ENCODE measurements at regions of chr5 and their contacts with region 1.

Region 1: DNA sequence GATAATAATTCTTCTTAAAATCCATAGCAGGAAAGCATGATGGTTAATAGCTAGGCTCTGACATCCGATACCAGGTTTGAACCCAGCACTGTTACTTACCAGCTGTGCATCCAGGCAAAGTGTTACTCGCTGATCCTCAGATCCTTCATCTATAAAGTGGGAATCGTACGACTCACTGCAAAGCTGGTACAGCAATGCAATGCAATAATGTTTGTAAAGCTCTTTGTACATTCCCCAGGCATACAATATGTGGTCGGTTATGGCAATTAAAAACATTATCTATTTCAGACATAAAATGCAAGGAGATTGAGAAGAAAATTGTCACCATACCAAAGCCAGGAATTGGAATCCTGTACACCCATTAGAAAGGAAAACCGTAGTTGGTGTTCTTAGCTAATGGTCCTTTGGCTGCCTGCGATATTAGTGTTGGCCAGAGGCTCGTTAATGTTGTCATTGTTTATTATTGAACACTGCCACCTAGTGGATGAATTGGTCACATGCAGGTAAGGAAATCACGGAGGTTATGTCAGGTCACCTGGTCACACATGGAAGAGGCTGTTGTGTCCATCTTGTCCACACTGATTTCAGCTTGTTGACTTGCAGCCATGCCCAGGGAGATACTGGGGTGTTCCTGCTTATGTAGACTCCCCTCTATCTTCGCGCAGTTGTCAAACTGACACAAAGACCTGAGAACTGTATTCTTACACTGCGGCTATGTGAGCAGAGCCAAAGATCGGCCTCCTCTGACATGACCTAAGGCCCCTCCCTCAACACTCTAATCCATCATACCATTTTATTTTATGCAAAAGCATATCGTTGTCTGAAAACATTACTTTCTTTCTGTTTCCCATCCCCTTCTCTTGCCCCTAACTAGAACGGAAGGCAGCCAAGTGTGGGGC is 87.5 kb upstream of the PPP2R2B start:
- DNase-seq: peak; percentile 58
- H3K4me3 ChIP-seq: no peak overlapping the region
- H3K27ac ChIP-seq: no peak overlapping the region
- H3K4me1 ChIP-seq: no peaks in the 10 kb centered on the region
- H3K27me3 ChIP-seq: no peaks in the 10 kb centered on the region
- CTCF ChIP-seq: peak; percentile 91

Region 2: DNA sequence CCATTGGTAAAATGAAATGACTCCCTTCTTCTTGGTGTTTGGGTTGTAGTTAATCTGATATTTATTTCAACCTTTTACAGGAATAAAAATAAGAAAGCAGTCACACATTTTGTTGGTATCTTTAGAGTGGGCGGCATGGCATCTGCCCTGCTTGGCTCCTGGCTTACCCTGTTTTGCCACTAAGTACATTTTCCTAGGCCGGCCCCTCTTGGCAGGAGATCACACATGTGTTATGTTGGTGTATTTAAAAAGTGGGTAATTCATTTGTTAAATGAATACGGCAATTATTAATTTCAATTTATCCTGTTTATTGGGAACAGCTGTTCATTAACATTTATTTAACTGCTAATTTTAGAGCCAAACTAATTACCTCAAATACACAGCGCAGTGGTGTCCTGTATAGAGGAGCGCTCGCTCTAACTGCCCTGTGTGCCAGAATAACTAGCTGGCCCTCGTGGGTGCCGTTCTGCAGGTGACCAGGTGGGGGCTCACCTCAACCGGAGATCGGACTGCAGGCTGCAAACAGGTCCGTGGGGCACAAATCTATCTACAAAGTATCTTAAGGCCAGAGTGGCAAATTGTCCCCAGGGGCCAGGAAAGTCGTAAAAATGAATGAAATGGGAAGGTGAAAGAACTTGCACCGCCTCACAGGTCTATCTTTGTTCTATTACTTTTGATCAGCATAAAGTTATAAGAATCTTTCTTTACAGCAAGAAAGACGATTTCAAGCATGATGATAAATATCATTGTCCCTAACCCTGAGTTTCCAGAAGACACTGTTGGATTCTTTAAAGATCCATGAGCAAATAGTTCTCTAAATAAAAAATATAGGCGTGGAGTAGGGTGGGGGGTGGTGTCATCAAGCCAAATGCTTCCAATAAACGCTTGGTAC is 423.8 kb before region 1 on chr5:
- intact Hi-C with region 1: loop called (anchors 5 kb)
- DNase-seq: peak; percentile 76
- H3K4me3 ChIP-seq: no peak overlapping the region
- H3K27ac ChIP-seq: no peak overlapping the region
- H3K4me1 ChIP-seq: no peaks in the 10 kb centered on the region
- H3K27me3 ChIP-seq: no peaks in the 10 kb centered on the region
- CTCF ChIP-seq: peak; percentile 79

Region 3: GRCh38 chr5:146647656-146648199 is 318.3 kb before region 1 on chr5:
- intact Hi-C with region 1: no loop called
- DNase-seq: no peak
- H3K4me3 ChIP-seq: no peak overlapping the region
- H3K27ac ChIP-seq: no peak overlapping the region
- H3K4me1 ChIP-seq: no peaks in the 10 kb centered on the region
- H3K27me3 ChIP-seq: no peaks in the 10 kb centered on the region
- CTCF ChIP-seq: no peak

Region 4: DNA sequence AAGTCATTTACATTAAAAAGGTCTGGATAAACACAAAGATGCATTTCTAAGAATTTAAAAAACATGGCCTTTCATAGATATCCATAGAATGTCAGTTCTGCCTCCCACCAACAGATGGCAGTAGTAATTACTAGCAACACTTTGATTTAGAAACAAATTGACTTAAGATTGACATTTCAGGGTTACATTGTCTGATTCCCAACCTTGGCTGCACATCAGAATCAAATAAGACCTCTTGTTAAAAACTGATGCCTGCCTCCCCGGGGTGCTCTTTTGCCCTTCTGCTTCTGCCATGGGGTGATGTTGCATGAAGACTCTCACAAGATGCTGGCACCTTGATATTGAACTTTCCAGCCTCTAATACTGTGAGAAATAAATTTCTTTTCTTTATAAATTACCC is 303.8 kb before region 1 on chr5:
- intact Hi-C with region 1: loop called (anchors 5 kb)
- DNase-seq: no peak
- H3K4me3 ChIP-seq: no peak overlapping the region
- H3K27ac ChIP-seq: no peak overlapping the region
- H3K4me1 ChIP-seq: no peaks in the 10 kb centered on the region
- H3K27me3 ChIP-seq: no peaks in the 10 kb centered on the region
- CTCF ChIP-seq: no peak